Activated T-helper 1 cell treated with anti-CD3 and anti-CD28 coated beads, Interleukin-12 subunit alpha, Interleukin-12 subunit beta, Interleukin-2, Interleukin-4 antibody, amounts not matched to agents 30 ng/mL and 10 ng/mL and 1 ng/mL, durations not matched to agents 14 hours and 24 hours and 36 hours (primary cell): ENCODE measurements at regions of chr13 and their contacts with region 1.

Region 1: GRCh38 chr13:44917589-44918325 is 71.5 kb downstream of the NUFIP1 start:
- DNase-seq: peak; percentile 94
- H3K4me3 Mint-ChIP-seq: no peak overlapping the region
- H3K27ac Mint-ChIP-seq: no peak overlapping the region
- H3K4me1 Mint-ChIP-seq: no peaks in the 10 kb centered on the region
- H3K27me3 Mint-ChIP-seq: no peaks in the 10 kb centered on the region

Region 2: DNA sequence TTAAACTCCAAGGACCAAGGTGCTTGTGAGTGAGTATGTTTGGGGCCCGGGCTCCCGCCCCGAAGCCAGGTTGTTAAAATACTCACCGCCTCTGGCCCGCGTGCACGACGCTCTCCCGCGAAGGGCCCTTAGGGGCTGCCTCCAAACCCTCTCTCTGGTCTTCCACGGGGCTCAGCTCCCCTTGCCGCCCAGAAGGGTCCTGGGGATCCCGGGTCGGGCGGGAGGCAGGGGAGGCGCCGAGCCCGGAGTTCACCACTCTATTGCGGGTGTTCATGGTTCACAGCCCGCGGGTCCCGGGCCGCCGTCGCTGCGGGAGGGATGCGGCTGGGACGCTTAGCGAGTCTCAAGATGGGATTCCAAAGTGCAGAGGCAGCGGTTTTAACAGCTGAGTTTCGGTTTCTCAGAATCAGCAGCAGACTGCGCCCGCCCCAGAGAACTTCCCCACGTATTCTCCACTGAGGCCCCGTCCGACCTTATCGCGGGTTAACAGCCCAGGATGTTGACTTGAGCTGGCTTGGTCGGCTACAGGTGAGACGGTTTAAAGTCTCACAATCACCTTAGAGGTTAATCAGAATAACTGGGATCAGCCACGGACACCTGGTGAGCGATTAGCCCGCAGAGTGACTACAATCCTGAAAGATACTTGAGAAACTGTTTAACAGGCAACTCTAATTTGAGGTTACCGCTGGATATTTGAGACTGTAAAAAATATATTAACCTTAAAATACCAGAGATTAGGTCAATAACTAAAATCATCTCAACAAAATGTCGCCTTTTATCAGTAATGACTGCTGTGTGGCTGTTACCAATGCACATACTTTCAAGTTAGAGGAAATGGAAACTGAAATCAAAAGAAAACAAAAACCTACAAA is 1925.6 kb before region 1 on chr13 and contains the start of gene EPSTI1:
- intact Hi-C with region 1: loop called (anchors 5 kb)
- DNase-seq: peak; percentile 80
- H3K4me3 Mint-ChIP-seq: peak within 1 kb of the TSS; percentile 95
- H3K27ac Mint-ChIP-seq: peak within 1 kb of the TSS; percentile 97
- H3K4me1 Mint-ChIP-seq: peaks cover 76% of the 10 kb centered on the region
- H3K27me3 Mint-ChIP-seq: no peaks in the 10 kb centered on the region
- total RNA-seq, gene EPSTI1: 18.6 and 19.3 TPM in 2 replicates

Region 3: GRCh38 chr13:44259045-44260027 is 658.4 kb before region 1 on chr13:
- intact Hi-C with region 1: loop called (anchors 1 kb)
- DNase-seq: peak; percentile 62
- H3K4me3 Mint-ChIP-seq: peak overlapping the region; percentile 75
- H3K27ac Mint-ChIP-seq: peak overlapping the region; percentile 83
- H3K4me1 Mint-ChIP-seq: peaks cover 14% of the 10 kb centered on the region
- H3K27me3 Mint-ChIP-seq: peaks cover 4% of the 10 kb centered on the region

Region 4: DNA sequence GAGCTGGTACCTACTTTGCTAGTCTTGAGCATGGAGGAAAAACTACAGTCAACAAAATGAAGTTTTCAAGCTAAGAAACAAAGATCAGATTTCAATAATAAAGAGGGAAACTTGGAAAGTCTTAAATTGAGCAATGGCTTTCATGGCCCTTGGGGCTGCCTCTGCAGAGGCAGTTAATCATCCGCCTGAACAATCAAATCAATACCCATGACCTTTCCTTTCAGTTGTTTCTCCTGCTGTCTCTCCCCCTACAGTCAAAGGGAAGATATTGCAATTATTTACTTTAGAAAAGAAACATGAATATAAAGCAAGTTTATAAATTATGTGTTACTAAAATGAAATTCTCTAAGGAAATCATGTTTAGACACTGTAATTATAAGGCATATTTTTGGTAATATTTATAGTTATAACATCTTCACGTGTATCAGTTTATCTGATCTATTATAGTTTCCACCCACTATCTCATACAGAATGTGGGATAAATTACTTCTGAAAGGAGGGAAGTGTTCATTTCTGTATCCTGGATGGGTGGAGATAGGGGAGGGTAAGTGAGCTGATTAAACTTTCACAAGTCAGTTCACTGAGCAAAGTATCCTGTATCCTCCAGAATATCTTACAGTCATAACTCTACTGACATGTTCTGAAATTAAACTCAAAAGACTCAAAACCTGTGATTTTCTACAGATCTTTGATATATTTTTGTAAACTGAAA is 269.2 kb before region 1 on chr13:
- intact Hi-C with region 1: loop called (anchors 1 kb)
- DNase-seq: no peak
- H3K4me3 Mint-ChIP-seq: no peak overlapping the region
- H3K27ac Mint-ChIP-seq: peak overlapping the region; percentile 37
- H3K4me1 Mint-ChIP-seq: peaks cover 21% of the 10 kb centered on the region
- H3K27me3 Mint-ChIP-seq: peaks cover 9% of the 10 kb centered on the region

Region 5: DNA sequence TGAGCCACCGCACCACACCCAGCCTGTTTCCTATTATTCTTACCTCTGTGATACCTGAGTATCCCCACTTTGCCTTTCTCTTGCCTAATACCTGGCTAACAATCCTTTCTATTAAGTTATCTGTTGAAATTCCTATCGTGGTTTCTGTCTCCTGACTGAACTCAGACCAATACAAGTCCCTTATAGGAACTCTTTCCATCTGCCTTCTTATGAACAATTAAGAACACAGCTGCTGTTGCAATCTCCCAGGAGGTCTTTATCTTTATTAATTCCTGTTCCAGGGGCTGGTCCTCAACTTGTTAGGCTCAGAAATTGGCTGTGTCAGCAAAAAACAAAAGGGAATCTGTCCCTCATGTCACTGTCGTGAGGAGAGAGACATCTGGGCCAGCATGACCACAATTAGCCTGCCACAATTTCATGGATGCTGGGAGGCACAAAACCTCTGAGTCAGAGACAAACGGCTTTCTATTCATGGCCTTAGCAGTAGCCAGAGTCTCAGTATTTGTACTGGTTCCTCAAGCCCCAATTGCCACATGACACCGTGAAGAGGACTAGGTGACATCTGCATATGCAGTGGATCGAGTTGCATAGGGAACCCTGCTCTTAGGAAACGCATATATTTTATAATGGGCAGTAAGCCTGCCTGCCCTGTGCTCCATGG is 13.3 kb after region 1 on chr13:
- intact Hi-C with region 1: loop called (anchors 1 kb)
- DNase-seq: no peak
- H3K4me3 Mint-ChIP-seq: no peak overlapping the region
- H3K27ac Mint-ChIP-seq: no peak overlapping the region
- H3K4me1 Mint-ChIP-seq: peaks cover 9% of the 10 kb centered on the region
- H3K27me3 Mint-ChIP-seq: peaks cover 16% of the 10 kb centered on the region

Region 6: DNA sequence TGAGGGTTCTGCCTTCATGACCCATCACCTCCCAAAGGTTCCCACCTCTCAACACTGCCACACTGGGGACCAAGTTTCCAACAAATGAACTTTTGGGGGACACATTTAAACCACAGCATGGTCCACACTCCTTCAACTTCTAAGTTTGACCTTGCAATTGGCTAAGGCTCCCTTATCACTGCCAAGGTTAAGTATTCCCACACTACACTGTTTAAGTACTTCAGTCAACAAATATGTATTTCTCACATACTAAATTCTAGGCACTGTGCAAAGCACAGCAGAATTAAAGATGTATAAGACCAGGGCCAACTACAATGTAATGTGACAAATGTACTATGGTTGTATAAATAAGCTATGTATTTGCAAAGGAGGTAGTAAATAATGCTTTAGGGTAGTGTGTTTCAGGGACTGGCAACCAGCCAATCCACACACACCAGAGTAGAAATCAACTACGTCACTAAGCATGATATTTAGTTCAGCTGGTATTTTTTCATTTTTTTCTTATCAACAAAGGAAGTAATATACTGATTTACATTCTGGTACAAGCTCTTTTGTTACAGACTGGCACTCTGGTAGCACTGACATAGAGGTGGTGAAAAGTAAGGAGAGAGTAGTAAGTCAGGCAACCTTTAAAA is 59.3 kb after region 1 on chr13:
- intact Hi-C with region 1: no loop called
- DNase-seq: no peak
- H3K4me3 Mint-ChIP-seq: no peak overlapping the region
- H3K27ac Mint-ChIP-seq: no peak overlapping the region
- H3K4me1 Mint-ChIP-seq: no peaks in the 10 kb centered on the region
- H3K27me3 Mint-ChIP-seq: no peaks in the 10 kb centered on the region

Region 7: DNA sequence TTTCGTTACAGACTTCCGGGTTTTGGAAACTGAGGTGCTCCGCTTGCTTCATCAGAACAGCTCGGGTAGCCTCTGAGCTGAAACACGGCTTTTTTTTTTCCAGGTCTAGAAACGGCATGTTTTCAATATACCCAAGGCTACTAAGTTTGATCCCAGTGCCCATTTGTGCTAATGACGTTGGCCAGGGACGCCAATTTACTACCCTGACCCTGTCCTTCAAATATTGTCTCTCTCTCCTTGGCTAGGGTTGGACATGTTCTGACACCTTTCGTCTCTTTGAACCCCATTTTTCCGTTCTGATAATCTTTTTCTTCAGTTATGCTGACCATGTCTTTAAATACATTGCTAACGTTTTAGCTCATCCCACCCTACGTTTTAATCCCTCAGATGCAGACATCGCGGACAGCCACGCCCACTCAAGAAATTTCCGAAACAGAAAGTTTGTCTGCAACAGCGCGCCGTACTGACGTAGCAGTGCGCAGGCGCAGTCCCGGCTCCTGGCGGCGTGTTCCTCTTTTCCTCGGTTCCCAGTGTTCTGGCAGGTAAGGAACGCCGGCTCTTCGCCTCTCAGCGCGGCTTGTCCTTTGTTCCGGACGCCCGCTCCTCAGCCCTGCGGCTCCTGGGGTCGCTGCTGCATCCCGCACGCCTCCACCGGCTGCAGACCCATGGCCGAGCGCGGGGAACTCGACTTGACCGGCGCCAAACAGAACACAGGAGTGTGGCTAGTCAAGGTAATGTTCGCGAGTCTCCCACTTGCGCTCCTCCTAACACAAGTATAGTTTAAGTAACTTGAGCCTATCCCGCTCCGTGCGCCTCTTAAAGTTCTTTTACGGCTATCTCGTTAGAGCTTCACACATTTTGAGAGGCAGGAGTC is 202.5 kb after region 1 on chr13 and contains the start of gene GTF2F2:
- intact Hi-C with region 1: loop called (anchors 1 kb)
- DNase-seq: peak; percentile 85
- H3K4me3 Mint-ChIP-seq: no peak within 1 kb of the TSS
- H3K27ac Mint-ChIP-seq: no peak within 1 kb of the TSS
- H3K4me1 Mint-ChIP-seq: peaks cover 13% of the 10 kb centered on the region
- H3K27me3 Mint-ChIP-seq: no peaks in the 10 kb centered on the region
- total RNA-seq, gene GTF2F2: 30.1 and 30.8 TPM in 2 replicates

Region 8: GRCh38 chr13:45464687-45465453 is 547.1 kb after region 1 on chr13 and contains the start of gene COG3:
- intact Hi-C with region 1: loop called (anchors 1 kb)
- DNase-seq: peak; percentile 94
- H3K4me3 Mint-ChIP-seq: peak within 1 kb of the TSS; percentile 95
- H3K27ac Mint-ChIP-seq: peak within 1 kb of the TSS; percentile 79
- H3K4me1 Mint-ChIP-seq: peaks cover 43% of the 10 kb centered on the region
- H3K27me3 Mint-ChIP-seq: peaks cover 11% of the 10 kb centered on the region
- total RNA-seq, gene COG3: 22.9 and 23.2 TPM in 2 replicates